ENCODE measurements at regions of chr15 and their contacts with region 1.

Region 1: GRCh38 chr15:91302588-91303439 is 202.8 kb downstream of the SV2B start:
- DNase-seq: peak; percentile 78
- H3K4me3 Mint-ChIP-seq: no peak overlapping the region
- H3K27ac Mint-ChIP-seq: no peak overlapping the region
- H3K4me1 Mint-ChIP-seq: peaks cover 23% of the 10 kb centered on the region
- H3K27me3 Mint-ChIP-seq: peaks cover 63% of the 10 kb centered on the region

Region 2: DNA sequence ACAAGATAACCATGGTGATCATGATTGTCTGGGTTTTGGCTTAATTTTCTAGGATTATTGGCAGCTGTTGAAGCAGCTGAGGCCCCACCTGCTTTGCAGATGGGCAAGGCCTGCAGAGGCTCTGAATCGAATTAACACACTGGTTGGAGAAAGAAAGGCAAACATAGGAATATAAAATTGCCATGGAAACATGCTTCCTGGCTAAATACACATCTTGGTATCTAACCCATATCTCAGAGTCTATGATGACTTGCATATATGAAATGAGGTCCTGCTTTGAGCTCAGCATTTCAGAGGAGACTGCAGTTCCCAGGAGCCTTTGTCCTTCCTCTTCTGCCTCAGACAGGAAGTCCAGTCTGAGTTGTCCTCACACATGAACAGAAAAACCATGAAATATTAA is 227.1 kb before region 1 on chr15:
- intact Hi-C with region 1: no loop called
- DNase-seq: no peak
- H3K4me3 Mint-ChIP-seq: no peak overlapping the region
- H3K27ac Mint-ChIP-seq: no peak overlapping the region
- H3K4me1 Mint-ChIP-seq: no peaks in the 10 kb centered on the region
- H3K27me3 Mint-ChIP-seq: peaks cover 29% of the 10 kb centered on the region

Region 3: DNA sequence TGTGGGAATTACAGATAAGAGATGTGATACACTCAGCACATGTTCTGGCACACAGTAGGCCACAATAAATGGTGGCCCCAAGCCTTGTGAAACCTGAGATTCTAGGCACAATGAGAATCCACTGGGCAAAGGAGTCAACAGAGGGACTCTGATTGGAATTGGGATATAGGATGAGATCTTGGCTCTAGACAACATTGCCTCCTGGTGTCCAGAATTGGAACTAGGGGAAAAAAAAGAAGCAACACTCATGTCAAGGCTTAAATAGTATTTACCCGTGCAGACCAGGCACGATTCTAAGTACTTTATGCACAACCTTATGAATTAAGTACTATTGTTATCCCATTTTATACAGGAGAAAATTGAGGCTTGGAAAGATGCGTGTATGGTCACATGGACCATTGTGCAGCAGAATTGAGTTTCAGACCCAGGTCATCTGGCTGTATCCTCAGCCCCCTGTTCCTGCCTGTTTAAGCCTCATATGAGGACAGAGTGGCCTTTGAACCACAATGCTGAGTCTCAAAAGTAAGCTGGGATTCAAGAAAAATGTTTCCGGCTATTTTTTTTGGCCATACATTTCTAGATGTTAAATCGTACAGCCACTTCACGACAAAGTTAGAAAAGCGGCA is 77.9 kb before region 1 on chr15:
- intact Hi-C with region 1: no loop called
- DNase-seq: peak; percentile 60
- H3K4me3 Mint-ChIP-seq: no peak overlapping the region
- H3K27ac Mint-ChIP-seq: no peak overlapping the region
- H3K4me1 Mint-ChIP-seq: no peaks in the 10 kb centered on the region
- H3K27me3 Mint-ChIP-seq: peaks cover 15% of the 10 kb centered on the region

Region 4: DNA sequence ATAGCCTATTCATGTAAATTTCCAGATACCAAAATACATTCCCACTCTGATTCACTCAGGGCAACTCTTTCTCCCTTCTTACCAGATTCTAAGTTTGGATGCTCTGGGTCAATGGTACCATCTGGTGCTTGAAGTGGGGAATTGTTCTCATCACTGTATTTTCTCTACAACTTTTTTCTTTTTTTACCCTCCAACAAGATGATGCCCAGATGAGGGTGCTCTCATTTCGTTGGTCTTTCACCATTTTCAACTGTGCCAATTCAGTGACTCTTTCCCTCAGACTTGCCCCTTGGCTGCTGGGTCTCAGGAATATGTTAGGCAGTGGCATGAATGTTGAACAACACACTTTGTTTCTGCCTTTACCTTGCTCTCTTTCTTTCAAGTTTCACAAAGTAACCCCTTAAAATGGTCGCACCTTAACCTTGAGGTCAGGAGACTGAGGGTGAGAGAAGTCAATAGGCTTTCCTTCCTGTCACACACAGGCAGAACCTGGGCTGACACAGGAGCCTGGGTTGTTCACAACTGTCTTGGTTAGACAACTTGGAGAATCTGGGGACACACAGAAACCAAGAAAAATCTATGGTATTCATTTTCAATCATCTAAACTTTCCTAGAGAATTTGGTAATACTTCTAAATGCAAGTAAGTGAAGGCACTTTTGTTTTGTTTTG is 220.0 kb after region 1 on chr15:
- intact Hi-C with region 1: loop called (anchors 1 kb)
- DNase-seq: peak; percentile 61
- H3K4me3 Mint-ChIP-seq: no peak overlapping the region
- H3K27ac Mint-ChIP-seq: no peak overlapping the region
- H3K4me1 Mint-ChIP-seq: peaks cover 9% of the 10 kb centered on the region
- H3K27me3 Mint-ChIP-seq: peaks cover 7% of the 10 kb centered on the region

Region 5: GRCh38 chr15:91942676-91943576 is 640.1 kb after region 1 on chr15:
- intact Hi-C with region 1: loop called (anchors 5 kb)
- DNase-seq: peak; percentile 88
- H3K4me3 Mint-ChIP-seq: peak overlapping the region; percentile 75
- H3K27ac Mint-ChIP-seq: peak overlapping the region; percentile 85
- H3K4me1 Mint-ChIP-seq: peaks cover 38% of the 10 kb centered on the region
- H3K27me3 Mint-ChIP-seq: peaks cover 4% of the 10 kb centered on the region

Region 6: GRCh38 chr15:92077353-92078085 is 774.7 kb after region 1 on chr15:
- intact Hi-C with region 1: loop called (anchors 2 kb)
- DNase-seq: peak; percentile 89
- H3K4me3 Mint-ChIP-seq: no peak overlapping the region
- H3K27ac Mint-ChIP-seq: no peak overlapping the region
- H3K4me1 Mint-ChIP-seq: peaks cover 18% of the 10 kb centered on the region
- H3K27me3 Mint-ChIP-seq: no peaks in the 10 kb centered on the region

Region 7: DNA sequence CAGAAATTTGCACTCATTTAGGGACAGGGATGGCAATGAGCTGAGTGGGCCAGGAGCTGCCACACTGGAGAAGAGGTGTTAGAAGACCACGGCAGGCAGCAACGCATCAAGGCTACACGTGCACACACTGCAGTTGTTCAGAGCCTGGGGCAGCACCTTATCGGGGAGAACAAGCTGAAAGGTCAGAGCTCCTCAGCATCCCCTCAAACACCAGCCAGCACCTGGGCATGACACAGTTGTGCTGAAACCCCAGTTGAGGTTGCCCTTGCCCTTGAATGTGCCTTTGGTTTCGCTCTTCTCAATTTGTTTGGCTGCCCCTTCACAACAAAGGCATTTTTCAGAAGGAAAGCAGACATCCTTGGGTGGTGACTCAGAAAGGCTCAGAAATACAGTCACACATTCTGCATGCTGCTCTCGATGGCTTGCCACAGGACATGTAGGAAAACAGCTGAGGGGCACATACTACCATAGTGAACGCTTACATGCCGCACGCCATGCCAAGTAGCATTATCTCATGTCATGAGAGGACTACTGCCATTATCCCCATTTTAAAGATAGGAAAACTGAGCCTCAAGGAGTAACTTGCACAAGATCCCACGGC is 1148.5 kb after region 1 on chr15:
- intact Hi-C with region 1: no loop called
- DNase-seq: no peak
- H3K4me3 Mint-ChIP-seq: no peak overlapping the region
- H3K27ac Mint-ChIP-seq: no peak overlapping the region
- H3K4me1 Mint-ChIP-seq: no peaks in the 10 kb centered on the region
- H3K27me3 Mint-ChIP-seq: peaks cover 5% of the 10 kb centered on the region

Measured in activated CD4-positive, alpha-beta T cell treated with anti-CD3 and anti-CD28 coated beads, Interleukin-2, amount 10 ng/mL, durations not matched to agents 24 days and 14 days (primary cell).